ENCODE measurements at regions of chr6 and their contacts with region 1.

Region 1: DNA sequence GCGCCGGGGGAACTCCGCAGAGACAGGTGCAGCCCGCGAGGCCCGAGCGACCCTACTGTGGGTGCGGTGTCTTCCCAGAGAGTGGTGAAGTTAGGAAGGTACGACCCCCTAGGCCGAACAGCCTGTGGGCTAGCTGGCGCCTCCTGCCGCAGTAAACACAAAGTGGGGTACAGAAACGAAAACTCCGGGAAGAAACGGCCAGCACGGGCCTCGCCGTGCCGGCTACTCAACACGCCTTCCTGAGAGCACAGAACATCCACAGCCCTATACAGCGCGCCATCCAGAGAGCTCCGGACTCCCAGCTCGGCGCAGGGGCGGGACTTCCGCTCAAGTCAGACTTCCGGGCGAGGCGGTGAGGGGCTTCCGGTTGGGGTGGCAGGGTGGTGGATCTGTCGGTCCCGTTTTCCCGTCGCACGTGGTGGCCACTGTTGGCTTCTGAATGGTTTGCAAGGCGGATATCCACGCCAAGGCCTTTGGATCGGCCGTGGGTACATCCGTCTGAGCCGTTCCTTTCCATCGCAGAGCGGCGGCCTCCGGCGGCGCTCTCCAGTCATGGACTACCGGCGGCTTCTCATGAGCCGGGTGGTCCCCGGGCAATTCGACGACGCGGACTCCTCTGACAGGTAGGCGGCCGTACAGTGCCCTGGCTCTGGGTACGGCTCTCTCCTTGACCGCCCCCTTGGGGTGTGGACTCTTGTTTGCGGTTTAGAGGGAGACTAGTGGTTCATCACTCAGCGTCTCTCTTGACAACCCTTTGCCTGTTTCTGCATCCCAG is at the starts of genes CAGE1 and RIOK1:
- DNase-seq: peak; percentile 97 to 98
- ATAC-seq: peak; percentile 99 to 100 (median 100)
- H3K4me3 ChIP-seq: peak within 1 kb of the TSS; percentile 96
- H3K27ac ChIP-seq: peak within 1 kb of the TSS; percentile 94
- H3K4me1 ChIP-seq: peaks cover 22% of the 10 kb centered on the region
- H3K27me3 ChIP-seq: no peaks in the 10 kb centered on the region
- CTCF ChIP-seq: peak; percentile 21
- total RNA-seq, gene CAGE1: not detected
- total RNA-seq, gene RIOK1: 8.5 to 26.1 (median 20.4) TPM

Region 2: GRCh38 chr6:6676910-6677441 is 712.7 kb before region 1 on chr6:
- intact Hi-C with region 1: loop called in 1 of 2 experiments (anchors 10 kb)
- DNase-seq: peak; percentile 72 to 79
- ATAC-seq: peak; percentile 83 to 95 (median 91)
- H3K4me3 ChIP-seq: no peak overlapping the region
- H3K27ac ChIP-seq: no peak overlapping the region
- H3K4me1 ChIP-seq: no peaks in the 10 kb centered on the region
- H3K27me3 ChIP-seq: no peaks in the 10 kb centered on the region
- CTCF ChIP-seq: peak; percentile 98

Region 3: DNA sequence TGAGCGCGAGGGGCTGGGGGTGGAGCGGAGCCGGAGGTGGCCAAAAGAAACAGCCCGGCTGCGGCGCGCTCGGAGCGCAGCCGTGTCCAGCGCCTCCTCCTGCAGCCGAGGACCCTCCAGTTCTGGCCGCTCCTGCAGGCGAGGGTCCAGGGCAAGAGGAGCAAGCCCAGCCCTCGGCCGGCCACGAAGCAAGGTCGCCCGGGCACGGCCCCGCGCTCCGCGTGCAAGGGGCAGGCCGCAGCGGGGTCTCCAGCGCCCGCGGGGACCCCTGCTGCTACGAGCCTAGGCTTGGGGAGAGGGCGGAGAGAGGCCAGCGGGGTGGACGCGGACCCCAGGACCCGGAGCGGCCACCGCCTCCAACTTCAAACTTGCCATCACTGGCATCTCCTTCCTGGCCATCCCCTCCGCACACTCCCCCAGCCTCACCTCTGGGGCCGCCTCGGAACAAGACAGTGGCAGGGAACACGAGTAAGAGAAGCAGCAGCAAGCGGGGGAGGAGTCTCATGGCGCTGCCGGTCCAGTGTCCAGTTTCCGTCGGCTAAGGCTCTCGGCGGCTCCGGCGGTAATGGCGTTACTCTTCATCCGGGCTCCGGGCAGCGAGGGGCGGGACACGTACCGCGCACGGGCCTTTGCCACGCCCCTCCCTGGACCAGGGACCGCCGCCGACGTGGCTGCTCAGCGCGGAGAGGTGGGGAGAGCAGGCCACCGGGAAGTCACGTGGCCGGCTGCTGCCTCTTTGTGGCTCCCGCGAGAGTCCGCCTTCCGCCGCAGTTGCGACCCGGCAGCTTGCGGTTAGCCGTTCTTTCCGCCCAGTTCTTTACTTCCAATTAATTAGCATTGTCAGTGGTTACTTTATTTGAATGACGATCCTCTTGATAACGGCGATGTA is 76.8 kb before region 1 on chr6 and contains the start of gene SSR1:
- intact Hi-C with region 1: loop called (anchors 2 to 5 kb)
- DNase-seq: peak; percentile 98 to 99
- ATAC-seq: peak; percentile 100
- H3K4me3 ChIP-seq: peak within 1 kb of the TSS; percentile 94
- H3K27ac ChIP-seq: peak within 1 kb of the TSS; percentile 90
- H3K4me1 ChIP-seq: peaks cover 20% of the 10 kb centered on the region
- H3K27me3 ChIP-seq: no peaks in the 10 kb centered on the region
- CTCF ChIP-seq: no peak
- total RNA-seq, gene SSR1: 29.9 to 37.3 (median 33.2) TPM

Region 4: DNA sequence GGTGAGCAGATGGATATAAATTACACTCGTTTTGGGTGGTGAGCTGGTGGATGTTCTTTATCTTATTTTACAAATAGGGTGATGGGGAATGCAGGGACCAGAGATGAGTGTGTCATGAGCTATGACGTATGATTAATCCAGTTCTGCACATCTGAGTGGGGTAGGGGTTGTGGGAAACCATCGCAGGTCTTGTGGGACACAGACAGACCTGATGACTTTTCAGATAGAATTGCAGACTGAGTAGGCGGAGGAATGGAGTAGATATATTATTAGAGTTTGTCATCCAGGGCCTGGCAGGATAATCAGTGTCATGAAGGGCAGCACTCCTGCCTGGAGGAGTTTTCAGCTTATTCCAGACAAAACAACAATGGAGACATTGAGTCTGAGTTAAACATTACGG is 138.9 kb after region 1 on chr6:
- intact Hi-C with region 1: no loop called
- DNase-seq: no peak
- ATAC-seq: no peak
- H3K4me3 ChIP-seq: no peak overlapping the region
- H3K27ac ChIP-seq: no peak overlapping the region
- H3K4me1 ChIP-seq: no peaks in the 10 kb centered on the region
- H3K27me3 ChIP-seq: peaks cover 0 to 21% (median 3%) of the 10 kb centered on the region in 3 donors
- CTCF ChIP-seq: no peak